ENCODE measurements at regions of chr15 and their contacts with region 1.

Region 1: DNA sequence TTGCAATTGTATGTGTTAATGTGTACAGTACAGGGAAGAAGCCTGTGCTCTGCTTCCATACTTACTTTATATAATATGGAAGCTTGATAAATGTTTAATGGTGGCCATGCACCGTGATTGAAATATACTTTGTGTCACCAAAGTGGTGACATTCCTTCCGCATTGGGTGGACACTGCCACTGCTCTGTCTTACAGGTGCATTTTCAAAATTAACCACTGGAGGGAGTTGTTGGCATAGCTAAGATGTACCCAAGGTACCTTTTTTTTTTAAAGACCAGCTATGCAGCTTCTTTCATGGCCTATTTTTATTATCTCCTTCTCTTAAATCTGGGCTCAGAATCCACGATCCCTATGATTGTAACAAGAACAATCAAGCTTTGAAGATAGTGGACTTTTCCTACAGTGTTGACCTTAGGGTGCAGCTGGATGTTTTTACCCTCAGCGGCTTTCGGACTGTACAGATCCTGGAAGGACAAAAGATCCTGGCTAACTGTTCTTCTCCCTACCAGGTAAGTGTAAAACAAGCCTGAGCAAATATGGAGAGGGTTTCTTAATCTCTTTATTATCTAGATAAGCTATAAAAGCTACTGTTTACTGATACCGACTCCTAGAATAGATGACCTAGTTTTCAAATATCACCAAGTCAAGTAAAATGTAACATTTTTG is 21.6 kb upstream of the PAK6 start:
- DNase-seq: peak; percentile 62
- CTCF ChIP-seq: peak; percentile 64

Region 2: GRCh38 chr15:39710681-39711080 is 506.6 kb before region 1 on chr15:
- in situ Hi-C with region 1: no loop called
- DNase-seq: no peak
- CTCF ChIP-seq: no peak

Region 3: GRCh38 chr15:40044717-40045571 is 172.3 kb before region 1 on chr15:
- in situ Hi-C with region 1: loop called (anchors 25 kb)
- DNase-seq: peak; percentile 88
- CTCF ChIP-seq: peak; percentile 99

Region 4: DNA sequence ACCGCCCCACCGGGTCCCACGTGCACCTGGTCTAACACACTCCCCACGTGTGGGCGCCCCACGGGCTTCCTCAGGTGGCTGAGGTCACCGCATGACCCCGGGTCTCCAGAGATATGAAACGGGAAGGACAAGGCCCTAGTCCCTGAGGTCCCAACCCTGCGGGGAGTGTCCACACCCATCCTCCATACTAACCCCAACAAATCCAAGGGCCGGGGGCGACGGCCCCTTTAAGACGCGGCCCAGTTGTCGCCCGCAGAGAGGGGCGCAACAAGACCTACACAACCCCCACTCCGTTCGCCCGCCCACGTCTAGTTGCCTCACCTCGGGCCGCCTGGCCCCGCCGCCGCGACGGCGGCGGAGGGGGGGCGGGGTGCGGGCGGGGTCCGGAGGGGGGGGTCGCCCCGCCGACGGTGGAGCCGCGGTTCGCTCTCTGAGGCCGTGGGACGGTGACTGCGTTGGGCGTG is 898.4 kb after region 1 on chr15:
- in situ Hi-C with region 1: no loop called
- DNase-seq: no peak
- CTCF ChIP-seq: no peak